Dendritic cell treated with granulocyte-macrophage colony-stimulating factor and Interleukin-4, amounts not matched to agents 40 ng/mL and 50 ng/mL, for 4 days (primary cell): ENCODE measurements at regions of chr10 and their contacts with region 1.

Region 1: GRCh38 chr10:48634198-48634983 is 29.5 kb upstream of the ARHGAP22 start:
- H3K4me3 Mint-ChIP-seq: peak overlapping the region; percentile 46
- H3K27ac Mint-ChIP-seq: peak overlapping the region; percentile 93
- H3K4me1 Mint-ChIP-seq: peaks cover 90% of the 10 kb centered on the region
- H3K27me3 Mint-ChIP-seq: peaks cover 4% of the 10 kb centered on the region

Region 2: DNA sequence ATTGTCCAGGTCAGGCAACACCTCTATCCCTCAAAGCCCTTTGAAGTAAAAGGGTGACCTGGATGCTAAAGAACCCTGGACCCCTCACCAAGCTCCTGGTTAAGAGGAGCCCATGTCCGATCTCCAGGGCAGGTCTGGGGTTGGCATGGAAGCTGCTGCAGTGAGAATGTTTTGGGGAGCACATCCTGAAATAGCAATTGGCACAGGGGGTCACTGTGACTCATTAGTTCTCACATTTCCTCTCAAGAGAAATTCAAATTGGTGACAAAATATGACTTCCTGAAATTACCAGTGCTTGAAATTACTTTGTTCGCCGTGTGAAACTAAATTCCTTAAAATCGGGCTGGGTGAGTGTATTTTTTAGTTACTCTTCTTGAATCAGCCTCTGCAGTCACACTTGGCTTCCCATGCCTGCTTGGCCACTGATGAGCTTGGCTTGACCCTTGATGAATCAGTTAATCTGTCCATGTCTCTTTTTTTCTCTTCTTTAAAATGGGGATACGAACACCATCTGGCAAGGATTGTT is 10.7 kb before region 1 on chr10:
- intact Hi-C with region 1: loop called (anchors 1 kb)
- H3K4me3 Mint-ChIP-seq: no peak overlapping the region
- H3K27ac Mint-ChIP-seq: peak overlapping the region; percentile 83
- H3K4me1 Mint-ChIP-seq: peaks cover 50% of the 10 kb centered on the region
- H3K27me3 Mint-ChIP-seq: peaks cover 3% of the 10 kb centered on the region

Region 3: GRCh38 chr10:48678041-48678440 is 43.6 kb after region 1 on chr10:
- intact Hi-C with region 1: no loop called
- H3K4me3 Mint-ChIP-seq: no peak overlapping the region
- H3K27ac Mint-ChIP-seq: no peak overlapping the region
- H3K4me1 Mint-ChIP-seq: peaks cover 12% of the 10 kb centered on the region
- H3K27me3 Mint-ChIP-seq: no peaks in the 10 kb centered on the region